Caco-2 (cell line): ENCODE measurements at regions of chr13 and their contacts with region 1.

Region 1: DNA sequence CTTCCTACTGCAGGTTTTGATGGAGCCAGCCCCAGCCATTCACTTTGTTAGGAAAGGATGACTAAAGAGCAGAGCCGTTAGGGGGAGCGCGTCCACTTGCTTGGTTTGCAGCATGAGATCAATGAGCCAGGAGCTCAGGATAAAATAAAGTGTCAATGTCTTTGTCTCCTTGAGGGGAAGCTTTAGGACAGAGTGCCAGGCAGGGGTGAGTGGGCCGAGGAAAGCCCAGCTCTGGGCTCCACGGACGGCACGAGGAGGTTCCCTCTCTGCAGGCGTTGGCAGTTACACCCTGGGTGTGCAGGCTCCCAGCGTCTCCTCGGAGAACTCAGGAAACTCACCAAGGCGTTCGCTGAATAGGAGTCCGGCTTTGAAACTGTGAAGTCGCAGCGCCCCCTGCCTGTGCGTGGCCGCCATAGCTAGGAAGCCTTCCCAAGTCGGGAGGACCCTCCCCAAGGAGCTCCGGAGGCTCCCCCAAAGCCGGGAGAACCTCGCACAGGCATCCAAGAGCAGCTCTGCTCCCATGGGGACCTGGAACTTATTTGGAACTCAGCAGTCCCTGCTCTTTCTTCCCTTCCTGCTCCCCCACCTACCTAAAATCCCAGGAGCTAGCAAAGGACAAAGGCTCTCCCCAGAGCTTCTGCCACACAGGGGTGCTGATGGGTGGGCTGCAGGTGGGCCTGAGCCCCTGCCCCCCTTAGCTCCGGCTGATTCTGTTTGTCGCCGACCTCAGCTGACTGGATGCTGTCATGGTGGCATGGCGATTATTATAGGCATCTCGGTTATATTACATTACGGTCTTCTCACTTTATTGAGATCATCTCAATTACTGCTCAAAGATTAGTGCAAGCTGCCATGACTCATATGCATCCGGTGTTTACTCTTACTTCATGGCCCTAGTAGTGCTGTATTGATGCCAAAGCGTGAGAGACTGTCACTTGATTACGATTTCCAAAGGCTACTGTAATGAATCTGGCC is 34.4 kb downstream of the GSX1 start:
- DNase-seq: peak; percentile 89 to 91
- H3K4me3 ChIP-seq: peak overlapping the region; percentile 27
- H3K4me3 Mint-ChIP-seq: peak overlapping the region; percentile 70
- H3K27ac Mint-ChIP-seq: no peak overlapping the region
- H3K4me1 ChIP-seq: 0 out of 2 replicates have a peak, but pooled peaks cover 6% of the 10 kb centered on the region
- H3K4me1 Mint-ChIP-seq: peaks cover 7% of the 10 kb centered on the region
- H3K27me3 ChIP-seq: peaks cover under 1% of the 10 kb centered on the region; the same call in 1 of the 2 replicates
- H3K27me3 Mint-ChIP-seq: peaks cover 22% of the 10 kb centered on the region
- CTCF ChIP-seq: peak; percentile 94

Region 2: GRCh38 chr13:26946684-26947343 is 879.9 kb before region 1 on chr13:
- CTCF ChIA-PET with region 1: interaction called, 6 read pairs
- POLR2A ChIA-PET with region 1: no interaction called
- intact Hi-C with region 1: loop called (anchors 1 kb)
- DNase-seq: peak; percentile 32 to 69
- H3K4me3 ChIP-seq: no peak overlapping the region
- H3K4me3 Mint-ChIP-seq: no peak overlapping the region
- H3K27ac Mint-ChIP-seq: no peak overlapping the region
- H3K4me1 ChIP-seq: peaks cover 48% of the 10 kb centered on the region
- H3K4me1 Mint-ChIP-seq: peaks cover 34% of the 10 kb centered on the region
- H3K27me3 ChIP-seq: no peaks in the 10 kb centered on the region
- H3K27me3 Mint-ChIP-seq: no peaks in the 10 kb centered on the region
- CTCF ChIP-seq: peak; percentile 87 to 97

Region 3: DNA sequence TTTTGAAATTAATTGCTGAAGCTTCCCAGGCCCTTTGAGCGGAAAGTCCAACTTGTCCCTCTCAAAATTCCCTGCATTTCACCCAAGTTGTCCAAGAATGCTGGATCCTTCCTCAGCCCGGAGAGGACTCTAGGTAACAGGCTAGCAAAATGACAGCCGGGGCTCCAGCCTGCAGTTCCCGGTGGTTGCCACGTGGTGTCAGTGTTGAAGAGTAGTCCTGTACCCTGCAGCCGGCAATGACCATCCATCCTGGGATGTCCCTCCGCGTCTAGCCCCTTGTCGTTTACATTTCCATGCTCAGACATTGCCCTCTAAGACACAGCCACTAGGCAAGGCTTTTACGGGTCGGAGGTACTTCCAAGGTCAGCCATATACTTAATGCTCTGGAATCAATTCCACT is 344.9 kb before region 1 on chr13:
- CTCF ChIA-PET with region 1: interaction called, 3 read pairs
- POLR2A ChIA-PET with region 1: no interaction called
- intact Hi-C with region 1: loop called (anchors 5 kb)
- DNase-seq: peak; percentile 65 to 70
- H3K4me3 ChIP-seq: no peak overlapping the region
- H3K4me3 Mint-ChIP-seq: no peak overlapping the region
- H3K27ac Mint-ChIP-seq: no peak overlapping the region
- H3K4me1 ChIP-seq: peaks cover 9% of the 10 kb centered on the region
- H3K4me1 Mint-ChIP-seq: peaks cover 9% of the 10 kb centered on the region
- H3K27me3 ChIP-seq: no peaks in the 10 kb centered on the region
- H3K27me3 Mint-ChIP-seq: no peaks in the 10 kb centered on the region
- CTCF ChIP-seq: peak; percentile 65 to 76

Region 4: GRCh38 chr13:27728271-27728670 is 98.4 kb before region 1 on chr13:
- CTCF ChIA-PET with region 1: interaction called, 15 read pairs
- POLR2A ChIA-PET with region 1: no interaction called
- intact Hi-C with region 1: loop called (anchors 1 kb)
- DNase-seq: peak in 1 of 2 experiments; percentile 37
- H3K4me3 ChIP-seq: no peak overlapping the region
- H3K4me3 Mint-ChIP-seq: no peak overlapping the region
- H3K27ac Mint-ChIP-seq: no peak overlapping the region
- H3K4me1 ChIP-seq: no peaks in the 10 kb centered on the region
- H3K4me1 Mint-ChIP-seq: no peaks in the 10 kb centered on the region
- H3K27me3 ChIP-seq: no peaks in the 10 kb centered on the region
- H3K27me3 Mint-ChIP-seq: peaks cover 7% of the 10 kb centered on the region
- CTCF ChIP-seq: peak; percentile 8 to 50

Region 5: DNA sequence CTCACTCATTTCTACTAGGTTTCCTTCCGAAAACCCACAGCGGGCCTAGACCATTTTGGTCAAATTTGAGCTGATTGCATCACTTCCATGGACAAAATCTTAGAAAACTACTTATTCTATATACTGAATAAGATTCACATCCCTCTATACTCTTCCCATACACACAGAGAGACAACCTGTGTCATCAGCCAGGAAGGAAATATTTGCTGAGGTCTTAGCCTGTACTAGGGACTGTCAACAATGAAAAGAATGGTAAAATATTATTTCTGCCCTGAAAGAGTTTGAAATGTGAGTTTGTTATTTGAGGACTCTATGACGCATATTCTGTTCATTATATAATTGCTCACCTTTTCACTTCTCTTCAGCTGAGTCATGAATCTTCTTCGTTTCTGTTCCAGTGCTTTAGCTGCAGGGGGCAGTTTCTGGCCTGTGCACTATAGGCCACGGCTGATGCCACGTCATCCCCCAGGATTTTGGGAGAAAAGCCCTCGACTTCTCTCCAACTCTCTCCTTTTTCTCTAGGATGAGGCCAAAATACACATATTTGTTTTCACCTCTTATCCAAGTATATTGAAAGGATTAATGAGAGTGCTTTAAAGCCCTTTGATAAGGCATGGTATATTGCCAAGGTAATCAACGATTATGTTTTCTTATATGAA is 13.3 kb after region 1 on chr13:
- CTCF ChIA-PET with region 1: interaction called, 4 read pairs
- POLR2A ChIA-PET with region 1: interaction called, 11 read pairs
- intact Hi-C with region 1: no loop called
- DNase-seq: no peak
- H3K4me3 ChIP-seq: no peak overlapping the region
- H3K4me3 Mint-ChIP-seq: no peak overlapping the region
- H3K27ac Mint-ChIP-seq: no peak overlapping the region
- H3K4me1 ChIP-seq: 0 out of 2 replicates have a peak, but pooled peaks cover 6% of the 10 kb centered on the region
- H3K4me1 Mint-ChIP-seq: peaks cover 12% of the 10 kb centered on the region
- H3K27me3 ChIP-seq: no peaks in the 10 kb centered on the region
- H3K27me3 Mint-ChIP-seq: no peaks in the 10 kb centered on the region
- CTCF ChIP-seq: peak in 1 of 2 experiments; percentile 4

Region 6: GRCh38 chr13:27953676-27954405 is 127.2 kb after region 1 on chr13:
- CTCF ChIA-PET with region 1: interaction called, 139 read pairs
- POLR2A ChIA-PET with region 1: interaction called, 16 read pairs
- intact Hi-C with region 1: loop called (anchors 1 kb)
- DNase-seq: peak; percentile 88 to 96
- H3K4me3 ChIP-seq: peak overlapping the region; percentile 56
- H3K4me3 Mint-ChIP-seq: peak overlapping the region; percentile 88
- H3K27ac Mint-ChIP-seq: peak overlapping the region; percentile 94
- H3K4me1 ChIP-seq: peaks cover 51% of the 10 kb centered on the region
- H3K4me1 Mint-ChIP-seq: peaks cover 13% of the 10 kb centered on the region
- H3K27me3 ChIP-seq: no peaks in the 10 kb centered on the region
- H3K27me3 Mint-ChIP-seq: no peaks in the 10 kb centered on the region
- CTCF ChIP-seq: peak; percentile 79 to 95

Region 7: GRCh38 chr13:27988520-27988919 is 161.9 kb after region 1 on chr13 and contains the start of gene URAD:
- CTCF ChIA-PET with region 1: interaction called, 82 read pairs
- POLR2A ChIA-PET with region 1: interaction called, 4 read pairs
- intact Hi-C with region 1: loop called (anchors 1 kb)
- DNase-seq: peak; percentile 69 to 75
- H3K4me3 ChIP-seq: no peak within 1 kb of the TSS
- H3K4me3 Mint-ChIP-seq: peak within 1 kb of the TSS; percentile 43
- H3K27ac Mint-ChIP-seq: peak within 1 kb of the TSS; percentile 48
- H3K4me1 ChIP-seq: peaks cover 25% of the 10 kb centered on the region
- H3K4me1 Mint-ChIP-seq: peaks cover 17% of the 10 kb centered on the region
- H3K27me3 ChIP-seq: no peaks in the 10 kb centered on the region
- H3K27me3 Mint-ChIP-seq: no peaks in the 10 kb centered on the region
- CTCF ChIP-seq: no peak
- total RNA-seq, gene URAD: 5.2 and 8.1 TPM in 2 replicates